Left cardiac atrium (tissue), 4 donors: ENCODE measurements at regions of chr7 and their contacts with region 1.

Region 1: GRCh38 chr7:85890244-85890811 is 703.5 kb upstream of the SEMA3D start:
- DNase-seq: no peak
- ATAC-seq: no peak

Region 2: DNA sequence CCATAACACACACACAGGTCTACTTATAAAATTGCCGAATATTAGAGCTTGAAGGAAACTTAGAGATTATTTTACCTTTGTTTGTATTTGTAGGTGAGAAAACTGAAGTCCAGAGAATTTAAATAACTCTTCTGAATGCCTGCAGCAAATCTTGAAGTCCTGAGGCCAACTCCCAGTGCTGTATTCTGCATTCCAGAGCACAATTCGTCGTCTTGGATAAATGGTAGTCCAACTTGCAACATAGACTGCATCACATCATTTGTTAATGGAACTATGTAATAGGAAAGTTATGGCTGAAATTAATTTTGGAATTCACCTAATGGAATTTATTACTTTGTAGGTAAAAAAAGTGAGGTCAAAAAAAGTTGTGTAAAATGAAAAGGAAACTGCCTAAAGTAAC is 666.2 kb before region 1 on chr7:
- intact Hi-C with region 1: no loop called
- DNase-seq: no peak
- ATAC-seq: no peak

Region 3: DNA sequence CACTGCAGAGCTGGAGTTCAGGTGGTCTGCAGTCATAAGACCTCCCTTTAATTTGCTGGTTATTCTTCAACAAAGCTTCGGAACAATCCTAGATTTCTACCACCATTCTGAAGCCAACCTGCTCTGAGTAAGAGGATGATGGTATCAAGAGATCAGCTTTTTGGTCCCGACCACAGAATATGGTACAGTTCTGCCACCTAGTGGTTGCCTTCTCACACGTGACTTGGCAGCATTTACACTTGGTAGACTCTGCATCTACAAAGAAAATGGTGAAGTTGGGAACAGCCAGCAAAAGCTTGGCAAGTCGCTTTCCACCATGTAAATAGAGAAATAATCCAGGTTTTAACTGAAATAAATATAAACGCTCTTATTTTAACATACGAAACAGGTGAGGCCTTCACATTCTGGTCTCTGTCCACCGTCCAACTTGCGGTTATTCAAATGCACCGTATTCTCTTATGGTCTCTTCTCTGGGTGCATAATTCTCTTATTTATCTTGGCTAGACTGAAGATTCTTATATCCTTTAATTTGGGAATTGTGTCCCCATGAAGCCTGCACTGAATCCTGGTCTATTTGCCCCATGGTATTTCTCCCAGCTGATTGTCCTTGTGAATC is 579.5 kb after region 1 on chr7:
- intact Hi-C with region 1: loop called (anchors 5 to 10 kb)
- DNase-seq: peak; percentile 26
- ATAC-seq: peak; percentile 53

Region 4: GRCh38 chr7:86814661-86815379 is 924.5 kb after region 1 on chr7:
- intact Hi-C with region 1: loop called in 1 of 2 experiments (anchors 10 kb)
- DNase-seq: no peak
- ATAC-seq: no peak

Region 5: GRCh38 chr7:86904949-86905834 is 1014.9 kb after region 1 on chr7:
- intact Hi-C with region 1: loop called (anchors 5 to 10 kb)
- DNase-seq: no peak
- ATAC-seq: no peak